PC-3 (cell line): ENCODE measurements at regions of chr5 and their contacts with region 1.

Region 1: DNA sequence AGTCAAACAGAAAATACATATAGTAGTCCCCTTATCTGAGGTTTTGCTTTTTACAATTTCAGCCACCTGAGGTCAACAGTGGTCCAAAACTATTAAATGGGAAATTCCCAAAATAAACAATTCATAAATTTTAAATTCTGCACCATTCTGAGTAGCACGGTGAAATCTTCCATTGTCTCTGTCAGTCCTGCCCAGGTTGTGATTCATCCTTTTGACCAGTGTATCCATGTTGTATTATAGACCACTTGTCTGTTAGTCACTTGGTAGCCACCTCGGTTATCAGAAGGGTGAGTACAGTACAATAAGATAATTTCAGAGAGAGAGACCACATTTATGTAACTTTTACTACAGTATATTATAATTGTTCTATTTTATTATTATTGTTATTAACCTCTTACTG is 2.8 kb downstream of the CCDC152 start:
- DNase-seq: peak; percentile 81
- ATAC-seq: peak; percentile 99
- H3K4me3 ChIP-seq: no peak overlapping the region
- H3K27ac ChIP-seq: peak overlapping the region; percentile 53
- H3K4me1 ChIP-seq: peaks cover 14% of the 10 kb centered on the region
- H3K27me3 ChIP-seq: no peaks in the 10 kb centered on the region
- CTCF ChIP-seq: no peak

Region 2: DNA sequence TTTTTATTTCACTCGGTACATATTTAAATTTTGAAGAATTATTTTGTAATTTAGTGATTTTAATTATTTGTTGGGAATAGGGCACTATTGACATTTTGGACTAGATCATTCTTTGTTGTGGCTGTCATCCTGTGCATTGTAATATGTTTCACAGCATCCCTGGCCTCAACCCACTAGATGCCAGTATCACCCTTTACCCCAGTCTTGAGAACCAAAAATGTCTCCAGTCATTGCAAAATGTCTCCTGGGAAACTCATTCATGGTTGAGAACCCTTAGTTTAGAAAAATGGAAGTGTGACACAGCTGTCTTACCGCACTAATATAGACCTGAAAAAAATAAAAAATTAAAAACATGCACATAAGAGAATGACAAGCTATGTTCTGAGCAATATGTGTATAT is 91.2 kb before region 1 on chr5:
- CTCF ChIA-PET with region 1: no interaction called
- POLR2A ChIA-PET with region 1: no interaction called
- intact Hi-C with region 1: loop called (anchors 1 kb)
- DNase-seq: no peak
- ATAC-seq: no peak
- H3K4me3 ChIP-seq: no peak overlapping the region
- H3K27ac ChIP-seq: no peak overlapping the region
- H3K4me1 ChIP-seq: no peaks in the 10 kb centered on the region
- H3K27me3 ChIP-seq: no peaks in the 10 kb centered on the region
- CTCF ChIP-seq: no peak

Region 3: DNA sequence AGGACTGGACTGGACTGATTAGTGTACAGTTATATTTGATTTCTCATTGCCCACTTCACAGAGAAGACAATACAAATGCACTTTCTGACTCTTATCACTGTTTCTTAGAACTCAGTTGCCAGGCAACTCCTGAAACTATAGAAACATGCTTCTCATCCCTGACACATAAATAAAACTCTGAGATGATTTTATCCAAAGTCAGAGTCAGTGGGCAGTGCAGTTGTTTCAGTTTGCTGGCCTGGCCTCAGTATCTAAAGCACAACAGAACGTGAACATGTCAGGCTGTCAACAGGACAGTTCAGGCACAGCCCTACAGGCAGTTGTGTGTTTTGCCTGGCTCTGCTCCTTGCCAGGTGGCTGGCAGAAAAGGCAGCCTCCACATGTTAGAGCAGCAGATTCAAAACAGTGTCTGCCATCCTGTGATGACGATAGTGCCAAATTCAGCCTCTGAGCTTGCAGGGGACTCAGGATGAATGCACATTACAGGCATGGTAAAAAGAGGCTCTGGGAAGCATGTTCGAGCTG is 68.0 kb before region 1 on chr5:
- CTCF ChIA-PET with region 1: no interaction called
- POLR2A ChIA-PET with region 1: no interaction called
- intact Hi-C with region 1: no loop called
- DNase-seq: no peak
- ATAC-seq: no peak
- H3K4me3 ChIP-seq: no peak overlapping the region
- H3K27ac ChIP-seq: no peak overlapping the region
- H3K4me1 ChIP-seq: no peaks in the 10 kb centered on the region
- H3K27me3 ChIP-seq: no peaks in the 10 kb centered on the region
- CTCF ChIP-seq: no peak

Region 4: DNA sequence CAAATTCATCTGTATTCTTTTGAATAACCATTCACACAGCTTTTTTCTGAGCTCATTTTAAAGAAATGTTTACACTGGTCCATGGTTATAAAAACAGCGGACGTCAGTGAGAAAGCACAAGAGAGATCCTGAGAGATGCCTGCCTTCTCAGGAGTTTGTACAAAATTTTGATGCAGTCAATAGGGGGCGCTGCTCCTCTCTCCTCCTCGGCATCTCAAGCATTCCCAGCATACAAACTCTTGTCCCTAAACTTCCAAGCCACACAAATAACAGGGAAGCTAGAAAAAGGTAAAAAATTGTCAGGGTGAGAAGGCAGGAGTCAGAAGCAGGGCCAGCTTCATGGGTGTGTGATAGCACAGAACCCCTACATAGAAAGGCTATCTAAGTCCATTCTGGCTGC is 14.0 kb before region 1 on chr5:
- CTCF ChIA-PET with region 1: no interaction called
- POLR2A ChIA-PET with region 1: no interaction called
- intact Hi-C with region 1: no loop called
- DNase-seq: peak; percentile 41
- ATAC-seq: no peak
- H3K4me3 ChIP-seq: no peak overlapping the region
- H3K27ac ChIP-seq: no peak overlapping the region
- H3K4me1 ChIP-seq: peaks cover 7% of the 10 kb centered on the region
- H3K27me3 ChIP-seq: no peaks in the 10 kb centered on the region
- CTCF ChIP-seq: peak; percentile 73